ENCODE measurements at regions of chr22 and their contacts with region 1.

Region 1: DNA sequence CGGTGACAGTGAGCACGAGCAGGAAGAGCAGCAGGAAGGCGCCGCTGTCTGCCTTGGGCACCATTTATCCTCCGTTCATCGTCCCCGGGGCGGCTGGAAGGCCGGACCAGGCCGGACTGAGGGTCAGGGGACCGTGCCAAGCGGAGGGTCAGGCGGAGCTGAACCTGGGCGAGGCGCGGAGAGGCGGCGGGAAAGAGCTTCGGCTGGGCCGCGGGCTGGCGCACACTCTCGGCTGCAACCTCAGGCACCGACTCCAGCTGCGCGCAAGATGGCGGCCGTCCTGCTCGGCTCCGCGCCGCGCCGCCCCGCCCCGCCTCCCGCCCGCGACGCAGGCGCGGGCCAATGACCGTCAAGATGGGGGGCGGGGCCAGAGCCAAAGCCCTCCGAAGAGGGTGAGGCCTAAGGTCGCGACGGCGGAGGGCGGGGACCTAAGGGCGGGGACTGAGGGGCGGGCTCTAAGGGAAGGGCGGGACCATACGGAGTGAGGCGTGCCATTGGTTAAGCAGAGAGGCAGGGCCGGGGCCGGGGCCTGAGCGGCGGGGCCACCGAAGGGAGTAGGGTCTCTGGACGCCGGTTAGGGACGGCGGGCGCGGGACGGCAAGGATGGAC is at the start of gene DGCR2:
- DNase-seq: peak; percentile 92 to 97 (median 94)
- H3K4me3 ChIP-seq: peak within 1 kb of the TSS; percentile 86
- H3K4me3 Mint-ChIP-seq: peak within 1 kb of the TSS; percentile 88 to 96 (median 90)
- H3K27ac ChIP-seq: peak within 1 kb of the TSS; percentile 82
- H3K27ac Mint-ChIP-seq: peak within 1 kb of the TSS; percentile 19 to 96 (median 90)
- H3K4me1 ChIP-seq: peaks cover 47% of the 10 kb centered on the region
- H3K4me1 Mint-ChIP-seq: peaks cover 39 to 54% (median 50%) of the 10 kb centered on the region in 3 donors
- H3K27me3 ChIP-seq: no peaks in the 10 kb centered on the region
- H3K27me3 Mint-ChIP-seq: no peaks in the 10 kb centered on the region
- total RNA-seq, gene DGCR2: 26.9 to 28.4 TPM

Region 2: DNA sequence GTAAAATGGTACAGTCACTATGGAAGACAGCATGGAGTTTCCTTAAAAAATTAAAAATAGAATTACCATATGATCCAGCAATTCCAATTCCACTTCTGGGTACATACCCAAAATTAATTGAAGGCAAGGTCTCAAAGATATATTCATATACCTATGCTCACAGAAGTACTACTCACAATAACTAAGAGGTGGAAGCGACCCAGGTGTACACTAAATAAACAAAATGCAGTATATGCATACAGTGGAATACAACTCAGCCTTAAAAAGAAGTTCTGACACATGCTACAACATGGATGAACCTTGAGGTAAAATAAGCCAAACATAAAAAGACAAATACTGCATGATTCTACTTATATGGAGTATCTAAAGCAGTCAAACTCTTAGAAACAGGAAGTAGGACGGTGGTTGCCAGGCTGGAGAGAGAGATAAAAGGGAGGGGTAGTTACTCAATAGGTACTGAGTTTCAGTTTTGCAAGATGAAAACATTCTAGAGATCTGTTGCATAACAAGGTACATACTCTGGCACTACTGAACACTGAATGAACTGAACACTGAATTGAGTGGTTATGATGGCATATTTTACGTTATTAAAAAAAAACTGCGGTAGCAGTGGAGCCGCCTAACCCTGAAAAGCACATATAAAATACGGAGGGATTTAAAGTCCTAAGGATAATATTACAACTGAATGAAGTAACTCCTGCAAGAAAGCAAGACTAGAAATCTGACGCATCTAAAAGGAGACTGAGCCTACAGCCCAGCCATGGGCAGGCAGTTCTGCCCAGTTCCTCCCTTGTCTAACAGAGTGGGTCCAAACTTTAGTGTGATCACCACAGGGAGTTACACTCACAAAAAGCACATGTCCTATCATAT is 12.8 kb before region 1 on chr22:
- CTCF ChIA-PET with region 1: interaction called, 4 read pairs
- POLR2A ChIA-PET with region 1: interaction called, 11 read pairs
- DNase-seq: peak; percentile 20 to 82 (median 66)
- H3K4me3 ChIP-seq: peak overlapping the region; percentile 48
- H3K4me3 Mint-ChIP-seq: peak overlapping the region; percentile 21 to 82 (median 79)
- H3K27ac ChIP-seq: peak overlapping the region; percentile 71
- H3K27ac Mint-ChIP-seq: peak overlapping the region; percentile 83 to 99 (median 94)
- H3K4me1 ChIP-seq: peaks cover 57% of the 10 kb centered on the region
- H3K4me1 Mint-ChIP-seq: peaks cover 64 to 85% (median 82%) of the 10 kb centered on the region in 3 donors
- H3K27me3 ChIP-seq: no peaks in the 10 kb centered on the region
- H3K27me3 Mint-ChIP-seq: peaks cover 0 to 1% of the 10 kb centered on the region in 2 donors

Region 3: DNA sequence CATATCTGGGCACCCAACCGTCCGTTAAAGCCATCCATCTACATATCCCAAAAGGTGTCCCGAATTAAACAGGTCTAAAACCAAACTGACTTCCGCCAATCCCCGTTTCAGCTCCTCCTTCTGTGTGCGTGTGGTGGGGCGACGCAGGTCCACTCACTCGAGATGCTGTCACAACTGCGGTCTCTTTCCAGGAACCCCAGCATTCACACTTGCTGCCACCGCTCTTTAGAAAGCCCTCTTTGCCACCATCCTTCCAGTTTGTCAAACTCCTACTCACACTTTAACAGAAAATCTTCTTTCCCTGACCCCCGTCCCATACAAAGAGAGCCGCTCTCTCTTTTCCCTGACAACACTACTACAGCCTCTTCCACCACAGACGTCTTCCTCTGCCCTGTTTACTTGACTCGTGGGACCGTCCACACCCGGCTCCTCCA is 21.7 kb after region 1 on chr22:
- CTCF ChIA-PET with region 1: interaction called, 10 read pairs
- POLR2A ChIA-PET with region 1: interaction called, 14 read pairs
- DNase-seq: peak in 4 of 5 donors; percentile 14 to 58 (median 28)
- H3K4me3 ChIP-seq: peak overlapping the region; percentile 84
- H3K4me3 Mint-ChIP-seq: peak overlapping the region; percentile 94 to 100 (median 99)
- H3K27ac ChIP-seq: peak overlapping the region; percentile 93
- H3K27ac Mint-ChIP-seq: peak overlapping the region; percentile 84 to 100 (median 98)
- H3K4me1 ChIP-seq: peaks cover 20% of the 10 kb centered on the region
- H3K4me1 Mint-ChIP-seq: peaks cover 16 to 29% (median 22%) of the 10 kb centered on the region in 3 donors
- H3K27me3 ChIP-seq: no peaks in the 10 kb centered on the region
- H3K27me3 Mint-ChIP-seq: peaks cover 0 to 8% of the 10 kb centered on the region in 2 donors